ENCODE measurements at regions of chr19 and their contacts with region 1.

Region 1: DNA sequence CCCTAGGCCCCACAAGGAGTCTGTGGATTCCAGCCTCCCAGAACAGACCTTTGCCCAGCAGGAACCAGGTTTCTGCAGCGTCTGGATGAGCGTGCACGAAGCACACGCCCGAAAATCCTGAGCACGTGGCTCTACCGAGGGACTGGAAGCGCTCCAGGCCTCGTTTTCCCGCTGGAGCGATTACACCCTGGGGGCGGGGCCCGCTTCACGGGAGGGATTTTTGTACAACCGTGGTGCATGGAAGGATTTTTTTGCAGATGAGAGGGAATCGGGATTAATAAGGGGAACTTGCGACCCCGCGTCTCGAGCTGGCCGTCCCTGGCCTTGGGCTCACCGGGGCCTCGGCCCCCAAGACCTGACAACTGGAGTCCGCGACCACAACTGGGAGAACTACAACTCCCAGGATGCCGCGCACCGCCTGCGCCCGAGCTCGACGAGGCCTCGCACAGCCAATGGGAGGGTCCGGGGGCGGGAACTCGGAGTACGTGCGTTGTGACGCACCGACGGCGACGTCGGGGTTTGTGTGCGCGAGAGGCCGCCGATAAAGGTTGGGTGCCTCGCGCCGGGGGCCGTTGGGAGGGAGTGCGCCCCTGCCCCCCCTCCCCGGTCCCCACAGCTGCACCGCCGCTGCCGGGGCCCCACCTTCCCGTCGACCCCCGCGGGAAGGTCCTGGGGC is at the start of gene ZNF628:
- DNase-seq: peak in 9 of 10 donors; percentile 95 to 98 (median 96)
- ATAC-seq: peak; percentile 94 to 96
- H3K4me3 Mint-ChIP-seq: peak within 1 kb of the TSS; percentile 82 to 92 (median 90)
- H3K27ac Mint-ChIP-seq: peak within 1 kb of the TSS; percentile 84 to 98 (median 94)
- H3K4me1 Mint-ChIP-seq: peaks cover 22 to 40% (median 30%) of the 10 kb centered on the region in 4 donors
- H3K27me3 Mint-ChIP-seq: no peaks in the 10 kb centered on the region
- polyA plus RNA-seq, gene ZNF628: 0.26 to 0.42 (median 0.32) TPM

Region 2: DNA sequence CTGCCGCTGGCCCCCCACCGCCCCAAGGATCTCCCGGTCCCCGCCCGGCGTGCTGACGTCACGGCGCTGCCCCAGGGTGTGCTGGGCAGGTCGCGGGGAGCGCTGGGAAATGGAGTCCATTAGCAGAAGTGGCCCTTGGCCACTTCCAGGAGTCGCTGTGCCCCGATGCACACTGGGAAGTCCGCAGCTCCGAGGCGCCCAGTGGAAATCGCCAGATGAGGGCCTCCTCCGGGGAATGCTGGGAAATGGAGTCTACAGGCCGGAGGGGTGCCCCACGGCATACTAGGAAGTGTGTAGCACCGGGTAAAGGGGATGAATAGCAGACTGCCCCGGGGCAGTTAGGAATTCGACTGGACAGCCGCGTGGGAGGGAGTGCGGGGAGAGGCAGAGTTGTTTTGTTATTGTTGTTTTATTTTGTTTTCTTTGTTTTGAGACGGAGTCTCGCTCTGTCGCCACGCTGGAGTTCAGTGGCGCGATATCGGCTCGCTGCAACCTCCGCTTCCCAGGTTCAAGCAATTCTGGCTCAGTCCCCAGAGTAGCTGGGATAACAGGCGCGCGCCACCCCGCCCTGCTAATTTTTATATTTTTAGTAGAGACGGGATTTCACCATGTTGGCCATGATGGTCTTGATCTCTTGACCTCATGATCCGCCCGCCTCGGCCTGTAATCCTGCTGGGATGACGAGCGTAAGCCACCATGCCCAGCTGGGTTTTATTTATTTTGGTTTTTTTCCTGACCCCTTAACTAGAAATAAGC is 358.4 kb before region 1 on chr19 and contains the start of gene PPP1R12C:
- POLR2A ChIA-PET with region 1: interaction called, 11 read pairs
- DNase-seq: peak; percentile 85 to 98 (median 93)
- ATAC-seq: peak; percentile 89 to 91
- H3K4me3 Mint-ChIP-seq: peak within 1 kb of the TSS; percentile 90 to 99 (median 98)
- H3K27ac Mint-ChIP-seq: peak within 1 kb of the TSS; percentile 94 to 97 (median 96)
- H3K4me1 Mint-ChIP-seq: peaks cover 20 to 40% (median 38%) of the 10 kb centered on the region in 4 donors
- H3K27me3 Mint-ChIP-seq: peaks cover 0 to 5% (median 4%) of the 10 kb centered on the region in 5 donors
- polyA plus RNA-seq, gene PPP1R12C: 2.7 to 6.2 (median 3.9) TPM

Region 3: DNA sequence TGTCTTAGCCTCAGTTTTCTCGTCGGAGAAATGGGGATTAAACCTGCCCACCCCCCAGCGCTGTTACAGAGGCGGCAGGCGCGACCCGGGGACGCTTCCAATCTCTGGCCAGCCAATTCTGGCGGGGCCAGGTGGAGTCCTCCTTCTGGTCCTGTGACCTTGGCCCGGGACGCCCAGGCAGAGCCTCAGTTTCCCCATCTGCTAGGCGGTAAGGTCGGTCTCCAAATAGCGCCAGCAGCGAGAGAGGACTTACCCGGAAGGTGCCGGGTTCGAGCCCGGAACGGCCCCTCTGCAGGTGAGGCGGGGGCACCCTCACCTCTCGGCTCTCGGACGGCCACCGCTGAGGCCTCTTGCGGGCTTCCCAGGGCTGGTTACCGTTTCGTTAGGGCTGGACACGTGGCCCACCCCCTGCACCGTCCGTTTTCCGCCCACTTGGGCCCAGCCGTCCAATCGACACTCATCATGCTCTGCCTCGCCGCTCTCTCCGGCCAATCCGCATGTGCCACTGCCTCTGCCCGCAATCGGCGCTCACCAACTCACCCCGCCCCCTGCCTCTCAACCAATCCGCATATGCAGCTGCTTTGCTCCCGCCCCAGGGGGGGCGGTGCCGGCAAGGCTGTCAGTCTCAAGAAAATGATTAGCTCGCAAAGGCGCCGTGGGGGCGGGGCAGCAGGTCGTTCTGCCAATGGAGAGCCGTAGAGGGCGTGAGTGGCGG is 14.8 kb before region 1 on chr19 and contains the start of gene ISOC2:
- POLR2A ChIA-PET with region 1: interaction called, 24 read pairs
- DNase-seq: peak; percentile 99 to 100 (median 100)
- ATAC-seq: peak; percentile 96
- H3K4me3 Mint-ChIP-seq: peak within 1 kb of the TSS; percentile 88 to 96 (median 91)
- H3K27ac Mint-ChIP-seq: peak within 1 kb of the TSS; percentile 89 to 96 (median 93)
- H3K4me1 Mint-ChIP-seq: peaks cover 15 to 30% (median 24%) of the 10 kb centered on the region in 4 donors
- H3K27me3 Mint-ChIP-seq: peaks cover 0 to 4% (median 0%) of the 10 kb centered on the region in 5 donors
- polyA plus RNA-seq, gene ISOC2: 30.5 to 35.6 (median 34.2) TPM

Region 4: GRCh38 chr19:55599468-55600279 is 123.4 kb after region 1 on chr19 and contains the start of gene FIZ1:
- POLR2A ChIA-PET with region 1: interaction called, 21 read pairs
- DNase-seq: peak; percentile 89 to 99 (median 96)
- ATAC-seq: peak; percentile 76 to 78
- H3K4me3 Mint-ChIP-seq: peak within 1 kb of the TSS; percentile 89 to 100 (median 99)
- H3K27ac Mint-ChIP-seq: peak within 1 kb of the TSS; percentile 96 to 100 (median 99)
- H3K4me1 Mint-ChIP-seq: peaks cover 16 to 39% (median 28%) of the 10 kb centered on the region in 4 donors
- H3K27me3 Mint-ChIP-seq: no peaks in the 10 kb centered on the region
- polyA plus RNA-seq, gene FIZ1: 2.8 to 5.4 (median 3.4) TPM

Region 5: DNA sequence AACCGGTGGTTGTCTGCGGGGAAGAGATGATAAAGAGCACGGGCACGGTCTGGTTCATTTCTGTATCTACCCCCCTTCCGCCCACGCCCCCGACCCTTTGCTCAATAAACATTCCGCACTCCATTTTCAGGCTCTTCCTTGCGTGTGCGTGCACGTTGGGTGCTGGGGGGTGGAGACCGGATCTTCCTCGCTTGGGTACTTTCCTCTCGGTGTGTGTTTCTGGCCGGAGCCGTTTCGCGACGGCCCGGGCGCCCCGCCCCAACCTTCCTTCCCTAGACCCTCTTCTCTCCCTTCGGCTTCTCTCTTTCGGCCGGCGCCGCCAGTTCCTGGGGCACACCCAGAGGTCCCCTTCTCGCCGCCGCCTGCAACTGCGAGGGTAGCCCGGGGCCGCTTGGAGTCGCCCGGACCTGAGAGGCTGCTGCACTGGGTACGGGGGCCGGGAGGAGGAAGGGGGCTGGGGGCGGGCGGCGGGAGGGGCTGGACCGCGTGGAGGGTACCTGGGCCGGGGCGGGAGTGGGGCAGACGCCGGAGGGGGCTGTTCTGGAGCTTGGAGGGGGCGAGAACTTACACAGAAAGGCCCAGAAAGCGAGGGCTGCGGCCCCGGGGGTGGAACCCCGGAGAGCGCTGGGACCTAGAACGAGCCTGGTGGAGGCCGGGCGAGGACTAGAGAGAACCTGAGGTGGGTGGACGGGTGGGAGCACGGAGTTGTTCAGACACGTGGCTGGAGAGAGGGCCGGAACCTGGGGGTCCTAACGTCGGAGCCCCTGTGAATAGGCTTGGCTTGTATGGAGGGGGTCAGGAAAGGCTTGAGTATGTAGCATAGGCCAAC is 167.3 kb after region 1 on chr19 and contains the start of gene ZNF581:
- POLR2A ChIA-PET with region 1: interaction called, 10 read pairs
- DNase-seq: peak; percentile 67 to 86 (median 76)
- ATAC-seq: peak; percentile 45 to 51
- H3K4me3 Mint-ChIP-seq: peak within 1 kb of the TSS; percentile 91 to 99 (median 94)
- H3K27ac Mint-ChIP-seq: peak within 1 kb of the TSS; percentile 94 to 99 (median 98)
- H3K4me1 Mint-ChIP-seq: peaks cover 30 to 64% (median 60%) of the 10 kb centered on the region in 4 donors
- H3K27me3 Mint-ChIP-seq: no peaks in the 10 kb centered on the region
- polyA plus RNA-seq, gene ZNF581: 21.2 to 35.9 (median 34.9) TPM